ENCODE measurements at regions of chr11 and their contacts with region 1.

Region 1: DNA sequence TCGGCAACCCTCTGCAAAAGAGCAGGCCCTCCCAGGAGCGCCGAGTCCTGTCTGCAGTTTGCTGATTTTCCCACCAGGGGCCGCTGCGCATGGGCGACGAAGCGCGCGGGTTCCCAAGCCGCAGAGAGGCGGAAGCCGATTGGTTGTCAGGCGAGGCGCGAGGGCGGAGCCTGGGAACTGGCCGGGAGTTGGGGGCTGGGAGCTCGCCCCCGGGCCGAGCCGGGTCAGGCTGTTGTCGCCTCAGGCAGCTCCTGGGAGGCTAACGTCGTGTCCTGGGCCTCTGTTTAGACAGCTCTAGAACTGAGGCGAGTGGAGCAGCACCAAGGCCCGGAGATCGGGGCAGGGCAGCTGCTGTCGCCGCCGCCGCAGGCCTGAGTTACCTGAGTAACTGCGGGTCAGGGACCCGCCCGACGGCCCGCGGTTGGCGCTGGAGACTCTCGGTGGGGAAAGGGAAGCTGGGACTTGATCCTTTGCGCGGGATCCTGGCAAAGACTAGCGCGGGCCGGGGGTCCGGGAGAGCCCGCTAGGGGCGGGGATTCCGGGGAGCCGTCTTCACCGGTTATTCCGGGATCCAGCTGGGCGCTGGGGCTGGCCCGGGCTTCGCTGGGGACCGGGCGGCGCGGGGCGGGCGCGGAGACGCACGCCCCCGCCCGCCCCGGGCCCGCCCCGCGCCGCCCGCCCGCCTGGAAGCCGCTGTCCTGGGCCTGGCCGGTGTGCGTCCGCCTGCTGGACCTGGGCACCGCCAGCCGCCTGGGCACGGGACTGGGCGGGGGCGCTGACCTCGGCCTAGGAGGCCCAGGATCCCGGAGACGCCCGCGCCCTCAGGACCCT is at the start of gene STIM1:
- DNase-seq: peak; percentile 95 to 98 (median 97)
- H3K4me3 ChIP-seq: peak within 1 kb of the TSS; percentile 84
- H3K4me3 Mint-ChIP-seq: peak within 1 kb of the TSS; percentile 91 to 99 (median 93)
- H3K27ac ChIP-seq: peak within 1 kb of the TSS; percentile 86
- H3K27ac Mint-ChIP-seq: peak within 1 kb of the TSS; percentile 98 to 100 (median 99)
- H3K4me1 ChIP-seq: peaks cover 58% of the 10 kb centered on the region
- H3K4me1 Mint-ChIP-seq: peaks cover 63 to 68% (median 66%) of the 10 kb centered on the region in 3 donors
- H3K27me3 ChIP-seq: no peaks in the 10 kb centered on the region
- H3K27me3 Mint-ChIP-seq: peaks cover 0 to 3% of the 10 kb centered on the region in 2 donors
- total RNA-seq, gene STIM1: 45.6 to 46.0 TPM

Region 2: DNA sequence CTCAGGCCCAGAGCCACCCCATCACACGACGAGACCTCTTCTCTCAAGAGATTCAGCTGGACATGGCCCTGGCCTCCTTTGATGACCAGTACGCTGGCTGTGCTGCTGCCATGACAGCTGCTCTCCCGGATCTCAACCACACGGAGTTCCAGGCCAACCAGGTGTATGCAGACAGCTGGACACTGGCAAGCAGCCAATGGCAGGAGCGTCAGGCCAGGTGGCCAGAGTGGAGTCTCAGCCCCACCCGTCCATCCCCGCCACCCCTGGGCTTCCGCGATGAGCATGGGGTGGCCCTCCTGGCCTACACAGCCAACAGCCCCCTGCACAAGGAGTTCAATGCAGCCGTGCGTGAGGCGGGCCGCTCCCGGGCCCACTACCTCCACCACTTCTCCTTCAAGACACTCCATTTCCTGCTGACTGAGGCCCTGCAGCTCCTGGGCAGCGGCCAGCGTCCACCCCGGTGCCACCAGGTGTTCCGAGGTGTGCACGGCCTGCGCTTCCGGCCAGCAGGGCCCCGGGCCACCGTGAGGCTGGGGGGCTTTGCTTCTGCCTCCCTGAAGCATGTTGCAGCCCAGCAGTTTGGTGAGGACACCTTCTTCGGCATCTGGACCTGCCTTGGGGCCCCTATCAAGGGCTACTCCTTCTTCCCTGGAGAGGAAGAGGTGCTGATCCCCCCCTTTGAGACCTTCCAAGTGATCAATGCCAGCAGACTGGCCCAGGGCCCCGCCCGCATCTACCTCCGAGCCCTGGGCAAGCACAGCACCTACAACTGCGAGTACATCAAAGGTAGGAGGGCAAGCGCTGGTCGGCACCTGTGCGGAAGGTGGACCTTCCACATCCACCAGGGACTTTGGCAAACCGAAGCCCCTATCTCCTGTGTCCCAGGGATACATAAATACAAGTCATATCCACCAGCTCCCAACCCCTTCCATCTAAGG is 195.3 kb before region 1 on chr11:
- CTCF ChIA-PET with region 1: no interaction called
- POLR2A ChIA-PET with region 1: no interaction called
- DNase-seq: no peak
- H3K4me3 ChIP-seq: no peak overlapping the region
- H3K4me3 Mint-ChIP-seq: no peak overlapping the region
- H3K27ac ChIP-seq: no peak overlapping the region
- H3K27ac Mint-ChIP-seq: peak overlapping the region in 2 of 8 donors; percentile 21 to 28
- H3K4me1 ChIP-seq: no peaks in the 10 kb centered on the region
- H3K4me1 Mint-ChIP-seq: no peaks in the 10 kb centered on the region
- H3K27me3 ChIP-seq: no peaks in the 10 kb centered on the region
- H3K27me3 Mint-ChIP-seq: peaks cover 6 to 18% of the 10 kb centered on the region in 2 donors

Region 3: GRCh38 chr11:3797329-3798095 is 57.7 kb before region 1 on chr11 and contains the start of gene NUP98:
- CTCF ChIA-PET with region 1: interaction called, 16 read pairs
- POLR2A ChIA-PET with region 1: interaction called, 5 read pairs
- DNase-seq: peak; percentile 99 to 100 (median 100)
- H3K4me3 ChIP-seq: peak within 1 kb of the TSS; percentile 97
- H3K4me3 Mint-ChIP-seq: peak within 1 kb of the TSS; percentile 83 to 98 (median 96)
- H3K27ac ChIP-seq: peak within 1 kb of the TSS; percentile 97
- H3K27ac Mint-ChIP-seq: peak within 1 kb of the TSS; percentile 98 to 100 (median 99)
- H3K4me1 ChIP-seq: peaks cover 33% of the 10 kb centered on the region
- H3K4me1 Mint-ChIP-seq: peaks cover 39 to 58% (median 50%) of the 10 kb centered on the region in 3 donors
- H3K27me3 ChIP-seq: no peaks in the 10 kb centered on the region
- H3K27me3 Mint-ChIP-seq: peaks cover 0 to 2% of the 10 kb centered on the region in 2 donors
- total RNA-seq, gene NUP98: 101 to 105 TPM

Region 4: GRCh38 chr11:3867209-3868091 is 12.3 kb after region 1 on chr11:
- CTCF ChIA-PET with region 1: interaction called, 127 read pairs
- POLR2A ChIA-PET with region 1: interaction called, 13 read pairs
- DNase-seq: no peak
- H3K4me3 ChIP-seq: peak overlapping the region; percentile 3
- H3K4me3 Mint-ChIP-seq: peak overlapping the region in 6 of 7 donors; percentile 13 to 55 (median 34)
- H3K27ac ChIP-seq: peak overlapping the region; percentile 63
- H3K27ac Mint-ChIP-seq: peak overlapping the region; percentile 26 to 91 (median 84)
- H3K4me1 ChIP-seq: peaks cover 87% of the 10 kb centered on the region
- H3K4me1 Mint-ChIP-seq: peaks cover 83 to 90% (median 89%) of the 10 kb centered on the region in 3 donors
- H3K27me3 ChIP-seq: no peaks in the 10 kb centered on the region
- H3K27me3 Mint-ChIP-seq: no peaks in the 10 kb centered on the region

Region 5: DNA sequence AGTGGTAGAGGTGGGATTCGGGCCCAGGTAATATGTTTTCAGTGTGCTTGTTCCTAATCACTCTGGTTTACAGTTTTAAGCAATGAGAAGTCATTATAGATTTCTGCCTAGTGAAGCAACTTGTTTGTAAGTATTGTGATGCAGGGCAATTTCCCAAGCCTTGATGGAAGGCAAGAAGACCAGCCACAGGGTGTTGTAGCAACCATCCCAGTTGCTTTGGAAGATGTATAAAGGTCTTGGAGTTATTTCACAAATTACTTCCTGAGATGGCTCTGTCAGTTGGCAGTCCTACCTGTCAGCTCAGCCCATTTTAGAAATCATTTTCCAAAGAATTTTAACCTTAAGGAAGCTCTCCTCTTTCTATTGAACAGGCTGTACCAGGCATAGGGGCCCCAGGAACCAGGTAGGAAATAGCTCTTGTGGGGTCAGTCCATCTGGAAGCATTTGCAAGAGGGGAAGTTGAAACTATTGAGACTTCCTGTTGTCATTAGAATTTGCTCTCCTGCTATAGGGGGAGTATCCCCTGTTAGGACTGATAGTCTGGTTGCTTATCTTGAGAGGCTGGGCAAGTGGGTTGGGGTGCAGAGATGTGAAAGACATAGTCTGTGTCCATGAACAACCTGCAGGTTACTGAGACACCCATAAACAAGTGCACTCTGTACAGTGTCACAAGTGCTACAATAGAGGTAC is 48.2 kb after region 1 on chr11:
- CTCF ChIA-PET with region 1: interaction called, 22 read pairs
- POLR2A ChIA-PET with region 1: interaction called, 4 read pairs
- DNase-seq: no peak
- H3K4me3 ChIP-seq: no peak overlapping the region
- H3K4me3 Mint-ChIP-seq: peak overlapping the region in 6 of 7 donors; percentile 13 to 78 (median 22)
- H3K27ac ChIP-seq: no peak overlapping the region
- H3K27ac Mint-ChIP-seq: peak overlapping the region; percentile 72 to 94 (median 87)
- H3K4me1 ChIP-seq: peaks cover 79% of the 10 kb centered on the region
- H3K4me1 Mint-ChIP-seq: peaks cover 71 to 79% (median 77%) of the 10 kb centered on the region in 3 donors
- H3K27me3 ChIP-seq: no peaks in the 10 kb centered on the region
- H3K27me3 Mint-ChIP-seq: no peaks in the 10 kb centered on the region

Region 6: DNA sequence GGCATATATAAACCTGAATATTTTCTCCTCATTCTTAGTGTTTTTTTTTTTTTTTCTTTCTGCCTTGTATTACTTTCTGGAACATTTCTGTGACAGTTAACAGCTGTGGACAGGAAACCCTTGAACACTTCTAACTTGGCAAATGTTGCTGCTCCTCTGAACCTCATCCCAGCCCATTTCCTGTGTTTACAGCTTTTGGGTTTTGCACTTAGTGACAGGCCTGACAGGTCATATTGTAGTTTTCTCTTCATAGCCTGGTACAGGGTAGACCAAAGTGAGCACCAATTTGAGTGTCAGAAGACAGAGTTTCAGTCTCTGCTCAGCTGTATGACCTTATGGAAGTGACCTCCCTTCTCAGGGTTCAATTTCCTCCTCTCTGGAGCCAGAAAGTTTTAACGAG is 91.9 kb after region 1 on chr11:
- CTCF ChIA-PET with region 1: interaction called, 39 read pairs
- POLR2A ChIA-PET with region 1: interaction called, 24 read pairs
- DNase-seq: peak; percentile 16 to 81 (median 70)
- H3K4me3 ChIP-seq: peak overlapping the region; percentile 54
- H3K4me3 Mint-ChIP-seq: peak overlapping the region; percentile 22 to 81 (median 77)
- H3K27ac ChIP-seq: peak overlapping the region; percentile 53
- H3K27ac Mint-ChIP-seq: peak overlapping the region; percentile 79 to 99 (median 92)
- H3K4me1 ChIP-seq: peaks cover 98% of the 10 kb centered on the region
- H3K4me1 Mint-ChIP-seq: peaks cover 94 to 97% (median 97%) of the 10 kb centered on the region in 3 donors
- H3K27me3 ChIP-seq: no peaks in the 10 kb centered on the region
- H3K27me3 Mint-ChIP-seq: no peaks in the 10 kb centered on the region

Region 7: DNA sequence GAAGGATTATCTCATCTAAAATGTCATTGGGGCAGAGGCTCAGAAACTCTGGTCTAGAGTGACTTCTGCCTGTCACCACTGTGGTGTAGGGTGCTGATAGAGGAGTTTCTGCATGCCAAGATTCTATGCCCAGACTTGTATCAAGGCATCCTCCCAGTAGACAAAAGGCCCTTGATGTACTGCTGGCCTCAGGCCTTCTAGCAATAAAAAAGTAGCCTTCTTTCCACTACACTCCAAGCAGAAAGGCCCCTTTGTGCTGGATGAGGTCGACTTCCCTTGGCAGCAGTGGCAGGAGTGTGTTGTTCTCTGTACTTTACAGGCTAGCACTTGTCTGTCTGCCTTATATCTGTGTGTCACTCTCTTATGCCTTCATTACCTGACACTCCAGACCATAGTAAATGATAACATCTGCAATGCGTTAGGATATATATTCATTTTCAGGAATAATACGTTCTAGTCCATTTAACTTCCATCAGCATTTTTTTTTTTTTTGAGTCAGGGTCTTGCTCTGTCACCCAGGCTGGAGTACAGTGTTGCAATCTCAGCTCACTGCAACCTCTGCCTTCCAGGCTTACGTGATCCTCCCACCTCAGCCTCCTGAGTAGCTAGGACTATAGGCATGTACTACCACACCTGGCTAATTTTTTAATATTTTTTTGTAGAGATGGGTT is 189.9 kb after region 1 on chr11:
- CTCF ChIA-PET with region 1: interaction called, 30 read pairs
- POLR2A ChIA-PET with region 1: interaction called, 5 read pairs
- DNase-seq: no peak
- H3K4me3 ChIP-seq: no peak overlapping the region
- H3K4me3 Mint-ChIP-seq: no peak overlapping the region
- H3K27ac ChIP-seq: no peak overlapping the region
- H3K27ac Mint-ChIP-seq: peak overlapping the region in 5 of 8 donors; percentile 25 to 69 (median 57)
- H3K4me1 ChIP-seq: peaks cover 6% of the 10 kb centered on the region
- H3K4me1 Mint-ChIP-seq: peaks cover 26 to 49% (median 31%) of the 10 kb centered on the region in 3 donors
- H3K27me3 ChIP-seq: no peaks in the 10 kb centered on the region
- H3K27me3 Mint-ChIP-seq: no peaks in the 10 kb centered on the region

Measured in CD8-positive, alpha-beta memory T cell (primary cell).